ENCODE measurements at regions of chrX and their contacts with region 1.

Region 1: GRCh38 chrX:150635952-150636351 is 57.2 kb upstream of the MTMR1 start:
- DNase-seq: no peak

Region 2: DNA sequence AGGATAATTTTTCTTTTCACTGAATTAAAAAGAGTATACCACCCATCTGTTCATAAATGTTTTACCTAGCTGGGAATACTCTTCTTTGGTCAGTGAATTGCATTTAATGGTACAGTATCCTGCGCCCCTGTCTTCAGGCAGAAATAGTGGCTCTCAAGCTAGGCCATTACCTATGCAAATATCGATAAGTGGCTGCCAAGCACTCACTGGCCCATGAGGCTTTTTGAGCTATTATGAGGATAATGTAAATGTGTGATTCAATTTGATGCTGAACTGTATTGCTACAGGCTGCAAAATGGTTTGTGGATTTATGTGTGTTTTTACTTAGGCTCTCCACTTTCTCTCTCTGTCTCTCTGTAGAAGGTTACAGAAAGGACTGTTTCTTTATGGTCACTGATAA is 27.1 kb after region 1 on chrX:
- intact Hi-C with region 1: no loop called
- DNase-seq: no peak

Region 3: GRCh38 chrX:151538190-151539122 is 902.5 kb after region 1 on chrX:
- intact Hi-C with region 1: loop called in 1 of 2 experiments (anchors 10 kb)
- DNase-seq: no peak

Measured in posterior vena cava (tissue), 2 donors.